ENCODE measurements at regions of chr3 and their contacts with region 1.

Region 1: DNA sequence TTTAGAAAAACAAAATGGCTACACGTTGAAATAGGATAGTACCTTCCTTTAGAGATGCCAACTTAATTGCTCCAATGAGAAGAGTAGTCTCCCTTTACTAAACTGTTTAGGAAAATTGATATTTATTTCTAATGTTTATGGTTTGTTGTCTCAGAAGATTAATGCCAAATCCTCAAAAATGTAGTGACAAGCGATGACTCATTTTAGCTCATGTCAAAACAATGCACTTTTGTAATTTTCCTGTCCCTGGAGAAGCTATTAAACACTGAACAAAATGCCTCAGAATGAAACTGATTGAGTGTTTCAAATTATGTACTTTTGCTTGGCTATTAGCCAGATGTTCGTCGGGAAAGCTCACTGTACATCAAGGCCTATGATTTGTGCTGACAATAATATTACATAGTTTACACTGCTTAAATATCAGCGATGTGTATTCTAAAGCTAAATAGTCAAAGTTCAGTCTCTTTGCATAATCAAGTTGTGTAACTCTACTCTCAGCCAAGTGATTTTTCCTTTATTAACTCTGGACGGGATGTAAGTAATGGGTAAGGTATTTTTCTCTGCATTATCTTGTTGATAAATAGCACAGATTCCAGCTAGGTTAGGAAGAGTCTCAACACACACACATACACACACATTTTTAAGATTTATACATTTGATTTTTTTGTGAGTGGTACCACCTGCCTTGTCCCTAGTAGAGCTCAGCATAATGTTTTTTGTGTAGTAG is 83.7 kb downstream of the CMSS1 start:
- DNase-seq: peak; percentile 94
- H3K4me3 ChIP-seq: peak overlapping the region in 1 of 3 experiments; percentile 6
- H3K27ac ChIP-seq: peak overlapping the region; percentile 99
- H3K4me1 ChIP-seq: peaks cover 34% of the 10 kb centered on the region
- H3K27me3 ChIP-seq: no peaks in the 10 kb centered on the region
- CTCF ChIP-seq: no peak

Region 2: GRCh38 chr3:99859825-99860224 is 41.5 kb before region 1 on chr3:
- CTCF ChIA-PET with region 1: no interaction called
- dilution Hi-C with region 1: no loop called
- in situ Hi-C with region 1: no loop called
- intact Hi-C with region 1: loop called (anchors 5 kb)
- DNase-seq: peak; percentile 75
- H3K4me3 ChIP-seq: no peak overlapping the region
- H3K27ac ChIP-seq: no peak overlapping the region
- H3K4me1 ChIP-seq: peaks cover 13% of the 10 kb centered on the region
- H3K27me3 ChIP-seq: no peaks in the 10 kb centered on the region
- CTCF ChIP-seq: no peak